ENCODE measurements at regions of chr5 and their contacts with region 1.

Region 1: DNA sequence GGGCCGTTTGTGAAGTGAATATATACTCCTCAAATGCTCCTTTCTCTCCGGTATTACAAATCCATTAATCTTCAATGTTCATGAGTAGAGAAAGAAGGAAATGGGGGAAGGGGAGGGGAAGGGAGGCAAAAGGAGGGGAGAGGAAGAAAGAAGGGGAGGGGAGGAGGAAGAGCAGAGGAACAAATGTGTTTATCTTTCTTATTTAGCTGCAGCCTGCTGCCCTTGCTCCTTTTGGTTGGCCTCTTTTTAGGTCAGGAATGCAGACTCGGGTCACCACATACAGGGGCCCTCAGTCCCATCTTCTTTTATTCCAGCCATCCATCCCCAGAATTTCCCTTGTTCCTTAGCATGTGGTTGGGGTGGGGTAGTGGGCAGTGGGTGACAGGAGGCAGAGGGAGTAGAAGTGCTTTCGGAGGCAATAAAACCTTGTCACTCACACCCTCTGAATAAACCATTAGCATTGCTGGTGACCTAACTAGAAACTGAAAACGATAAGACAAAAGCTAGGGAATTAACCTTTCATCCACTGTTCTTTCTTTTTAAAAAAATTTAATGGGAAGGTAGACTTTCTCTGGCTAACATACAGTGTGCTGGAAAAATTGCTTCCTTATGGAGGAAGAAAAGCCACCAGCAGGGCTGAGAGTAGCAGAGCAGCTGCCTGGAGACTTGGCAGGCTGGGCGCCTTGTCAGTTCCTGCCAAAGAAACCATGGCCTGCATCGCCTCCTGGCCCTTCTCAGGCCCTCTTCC is 16.8 kb upstream of the PRLR start:
- DNase-seq: no peak
- H3K4me3 ChIP-seq: no peak overlapping the region
- H3K27ac ChIP-seq: no peak overlapping the region
- H3K4me1 ChIP-seq: no peaks in the 10 kb centered on the region
- CTCF ChIP-seq: no peak

Region 2: GRCh38 chr5:35939639-35940038 is 692.6 kb after region 1 on chr5:
- CTCF ChIA-PET with region 1: no interaction called
- POLR2A ChIA-PET with region 1: no interaction called
- intact Hi-C with region 1: loop called (anchors 10 kb)
- DNase-seq: no peak
- H3K4me3 ChIP-seq: no peak overlapping the region
- H3K27ac ChIP-seq: no peak overlapping the region
- H3K4me1 ChIP-seq: no peaks in the 10 kb centered on the region
- CTCF ChIP-seq: peak; percentile 61

Measured in OCI-LY7 (cell line).